ENCODE measurements at regions of chrX and their contacts with region 1.

Region 1: GRCh38 chrX:16946361-16946964 is at the start of gene REPS2:
- DNase-seq: peak; percentile 77 to 83
- H3K4me3 ChIP-seq: peak within 1 kb of the TSS; percentile 66
- H3K27ac ChIP-seq: no peak within 1 kb of the TSS
- H3K4me1 ChIP-seq: peaks cover 26% of the 10 kb centered on the region; the same call in 1 of the 2 replicates
- H3K27me3 ChIP-seq: no peaks in the 10 kb centered on the region
- CTCF ChIP-seq: no peak
- total RNA-seq, gene REPS2: 15.4 and 29.2 TPM in 2 replicates

Region 2: GRCh38 chrX:16711219-16712111 is 235.0 kb before region 1 on chrX:
- CTCF ChIA-PET with region 1: no interaction called
- POLR2A ChIA-PET with region 1: no interaction called
- intact Hi-C with region 1: no loop called
- DNase-seq: no peak
- H3K4me3 ChIP-seq: peak overlapping the region; percentile 78
- H3K27ac ChIP-seq: no peak overlapping the region
- H3K4me1 ChIP-seq: no peaks in the 10 kb centered on the region
- H3K27me3 ChIP-seq: no peaks in the 10 kb centered on the region
- CTCF ChIP-seq: no peak

Region 3: GRCh38 chrX:16870095-16870860 is 76.2 kb before region 1 on chrX and contains the start of gene RBBP7:
- CTCF ChIA-PET with region 1: no interaction called
- POLR2A ChIA-PET with region 1: interaction called, 5 read pairs
- intact Hi-C with region 1: loop called (anchors 2 kb)
- DNase-seq: peak; percentile 74 to 94
- H3K4me3 ChIP-seq: peak within 1 kb of the TSS; percentile 85
- H3K27ac ChIP-seq: peak within 1 kb of the TSS; percentile 78
- H3K4me1 ChIP-seq: peaks cover 21% of the 10 kb centered on the region
- H3K27me3 ChIP-seq: no peaks in the 10 kb centered on the region
- CTCF ChIP-seq: no peak
- total RNA-seq, gene RBBP7: 152 and 197 TPM in 2 replicates

Measured in PC-9 (cell line).